Activated T-helper 1 cell treated with anti-CD3 and anti-CD28 coated beads, Interleukin-12 subunit alpha, Interleukin-12 subunit beta, Interleukin-2, Interleukin-4 antibody, amounts not matched to agents 30 ng/mL and 10 ng/mL and 1 ng/mL, durations not matched to agents 14 hours and 24 hours and 36 hours (primary cell): ENCODE measurements at regions of chr4 and their contacts with region 1.

Region 1: GRCh38 chr4:101730291-101731117 is 60.0 kb upstream of the BANK1 start:
- DNase-seq: peak; percentile 10
- H3K4me3 Mint-ChIP-seq: no peak overlapping the region
- H3K27ac Mint-ChIP-seq: no peak overlapping the region
- H3K4me1 Mint-ChIP-seq: no peaks in the 10 kb centered on the region
- H3K27me3 Mint-ChIP-seq: peaks cover 7% of the 10 kb centered on the region

Region 2: DNA sequence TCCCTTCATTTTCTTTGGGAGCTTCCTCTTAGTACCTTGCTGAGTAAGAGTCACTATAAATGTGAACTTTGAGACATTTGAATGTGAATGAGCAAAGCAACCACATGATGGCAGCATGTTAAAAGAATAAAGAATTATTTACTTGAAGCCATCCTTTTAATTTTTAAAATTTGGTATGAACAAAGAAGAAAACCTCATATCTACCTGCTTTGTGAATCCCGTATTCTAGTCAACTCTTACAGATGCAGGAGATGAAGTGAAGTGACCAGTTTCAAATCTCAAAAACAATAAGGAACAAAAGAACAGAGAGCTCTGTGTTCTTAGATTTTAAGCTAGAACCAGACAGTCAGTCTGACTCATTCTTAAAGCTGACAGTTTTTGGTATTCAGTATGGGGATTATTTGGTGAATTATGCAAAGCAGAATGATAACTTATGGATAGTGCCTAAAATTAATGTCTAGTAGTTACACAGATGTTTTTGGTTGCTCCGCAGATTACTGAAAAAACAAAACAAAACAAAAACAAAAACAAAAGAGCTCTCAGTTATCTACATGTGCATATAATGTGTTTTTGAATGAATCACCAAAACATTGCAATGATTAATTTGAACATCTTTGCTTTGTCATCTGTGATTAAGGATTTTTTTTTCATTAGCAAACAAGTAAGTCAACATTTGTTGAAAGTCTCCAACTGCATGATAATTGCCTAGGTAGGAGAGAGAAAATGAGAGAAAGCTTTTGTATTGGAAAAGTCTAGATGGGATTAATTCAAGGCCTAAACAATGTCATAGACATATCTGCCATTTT is 1732.2 kb before region 1 on chr4:
- intact Hi-C with region 1: loop called (anchors 10 kb)
- DNase-seq: no peak
- H3K4me3 Mint-ChIP-seq: no peak overlapping the region
- H3K27ac Mint-ChIP-seq: no peak overlapping the region
- H3K4me1 Mint-ChIP-seq: no peaks in the 10 kb centered on the region
- H3K27me3 Mint-ChIP-seq: peaks cover 8% of the 10 kb centered on the region

Region 3: GRCh38 chr4:100421361-100421978 is 1309.0 kb before region 1 on chr4:
- intact Hi-C with region 1: loop called (anchors 5 kb)
- DNase-seq: no peak
- H3K4me3 Mint-ChIP-seq: no peak overlapping the region
- H3K27ac Mint-ChIP-seq: no peak overlapping the region
- H3K4me1 Mint-ChIP-seq: no peaks in the 10 kb centered on the region
- H3K27me3 Mint-ChIP-seq: peaks cover 3% of the 10 kb centered on the region

Region 4: DNA sequence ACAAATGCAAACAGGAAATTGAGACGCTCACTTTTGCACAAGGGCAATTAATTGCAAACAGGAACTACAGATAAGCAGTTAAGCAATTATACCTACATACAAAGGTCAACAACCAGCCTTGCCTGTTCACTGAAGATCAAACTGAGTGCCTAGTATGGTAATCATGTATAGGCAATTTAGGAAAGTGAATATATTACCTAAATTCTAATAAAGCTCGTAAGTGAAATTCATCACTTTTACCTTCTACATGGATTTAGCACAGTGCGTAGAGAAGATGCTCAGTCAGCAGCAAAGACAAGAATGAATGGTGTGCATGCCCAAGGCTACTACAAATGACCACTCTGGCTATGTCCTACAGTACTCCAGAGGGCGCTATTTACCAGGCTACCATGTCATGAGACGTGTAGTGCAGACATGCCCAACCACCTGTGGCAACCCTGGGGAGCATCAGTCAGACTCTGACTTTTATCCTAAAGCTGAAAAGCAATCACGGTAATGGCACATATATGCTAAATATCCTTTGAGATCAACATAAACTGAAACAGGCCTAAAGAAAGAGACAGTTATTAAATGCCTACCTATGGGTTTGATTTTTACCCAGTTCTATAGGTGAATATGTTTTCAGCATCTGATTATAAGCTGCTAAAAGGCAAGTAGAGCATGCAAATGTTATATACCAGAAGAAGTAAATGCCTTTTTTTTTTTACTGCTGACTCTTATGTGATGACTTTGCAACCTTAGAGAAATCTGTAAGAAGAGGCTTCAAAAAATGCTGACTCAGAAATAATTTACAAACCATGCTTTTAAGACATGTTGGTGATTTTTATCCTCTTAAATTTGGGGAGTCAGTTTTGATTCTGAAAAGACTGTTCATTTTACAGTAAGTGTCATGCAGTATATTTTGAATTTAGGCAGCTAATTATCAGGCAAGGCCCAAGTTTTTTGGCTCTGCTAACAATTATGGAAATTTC is 561.2 kb before region 1 on chr4:
- intact Hi-C with region 1: loop called (anchors 1 kb)
- DNase-seq: peak; percentile 43
- H3K4me3 Mint-ChIP-seq: no peak overlapping the region
- H3K27ac Mint-ChIP-seq: no peak overlapping the region
- H3K4me1 Mint-ChIP-seq: no peaks in the 10 kb centered on the region
- H3K27me3 Mint-ChIP-seq: peaks cover 4% of the 10 kb centered on the region

Region 5: DNA sequence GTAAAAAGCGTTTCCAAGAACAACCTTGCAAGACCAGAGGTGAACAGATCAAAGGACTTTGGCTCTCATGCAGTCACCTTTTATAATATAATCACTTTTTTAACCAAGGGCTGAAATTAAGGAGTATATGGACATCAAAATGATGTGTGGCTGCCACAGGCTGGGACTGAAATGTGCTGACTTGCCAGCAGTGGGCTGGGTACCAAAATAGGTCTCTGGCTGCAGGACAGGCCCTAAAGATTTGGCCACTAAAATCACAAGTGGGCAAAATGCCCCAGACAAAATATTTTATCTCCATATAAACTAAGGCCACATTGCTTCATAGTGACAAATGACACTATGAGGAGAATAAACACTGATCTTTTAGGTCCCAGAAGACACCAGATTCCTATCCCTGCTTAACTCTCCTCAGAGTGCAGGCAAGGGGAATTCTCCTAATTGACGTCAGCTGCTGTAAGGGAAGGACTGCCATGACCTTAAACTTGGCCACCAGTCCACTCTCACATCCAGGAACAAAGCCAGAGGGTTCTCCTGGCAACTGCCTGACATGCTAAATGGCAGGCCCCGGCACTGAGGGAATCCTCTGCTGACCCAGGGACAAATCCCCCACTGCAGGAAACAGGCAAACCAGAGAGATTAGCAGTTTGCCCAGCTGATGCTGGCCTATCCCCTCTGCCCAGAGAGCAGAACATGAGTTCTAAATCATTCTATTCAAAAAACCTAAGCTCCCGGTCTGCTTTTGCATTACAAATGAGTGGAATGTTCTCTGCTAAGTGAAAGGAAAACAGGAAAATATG is 539.0 kb before region 1 on chr4:
- intact Hi-C with region 1: loop called (anchors 1 kb)
- DNase-seq: no peak
- H3K4me3 Mint-ChIP-seq: no peak overlapping the region
- H3K27ac Mint-ChIP-seq: no peak overlapping the region
- H3K4me1 Mint-ChIP-seq: peaks cover 7% of the 10 kb centered on the region
- H3K27me3 Mint-ChIP-seq: no peaks in the 10 kb centered on the region

Region 6: DNA sequence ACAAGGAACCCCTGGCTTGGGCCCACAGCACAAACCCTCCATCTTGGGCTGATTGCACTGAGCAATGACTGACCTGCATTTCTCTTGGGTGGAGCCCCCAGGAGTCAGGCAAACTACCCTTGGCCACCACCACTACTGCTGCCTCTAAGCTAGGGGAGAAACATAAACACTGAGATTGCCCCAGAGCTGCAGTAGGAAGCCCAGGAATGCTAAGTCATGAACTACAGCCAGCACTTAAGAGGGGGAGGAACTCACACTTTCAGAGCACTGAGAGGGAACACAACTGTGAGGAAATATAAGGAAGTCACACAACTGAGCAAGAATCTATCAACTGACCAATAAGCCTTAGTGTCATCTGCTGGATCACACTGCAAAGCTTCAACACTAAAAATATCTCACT is 271.6 kb before region 1 on chr4:
- intact Hi-C with region 1: no loop called
- DNase-seq: no peak
- H3K4me3 Mint-ChIP-seq: no peak overlapping the region
- H3K27ac Mint-ChIP-seq: no peak overlapping the region
- H3K4me1 Mint-ChIP-seq: no peaks in the 10 kb centered on the region
- H3K27me3 Mint-ChIP-seq: peaks cover 2% of the 10 kb centered on the region